GM10248 (cell line): ENCODE measurements at regions of chr4 and their contacts with region 1.

Region 1: GRCh38 chr4:165124463-165124862 is 11.8 kb upstream of the TMEM192 start:
- DNase-seq: no peak
- CTCF ChIP-seq: no peak

Region 2: DNA sequence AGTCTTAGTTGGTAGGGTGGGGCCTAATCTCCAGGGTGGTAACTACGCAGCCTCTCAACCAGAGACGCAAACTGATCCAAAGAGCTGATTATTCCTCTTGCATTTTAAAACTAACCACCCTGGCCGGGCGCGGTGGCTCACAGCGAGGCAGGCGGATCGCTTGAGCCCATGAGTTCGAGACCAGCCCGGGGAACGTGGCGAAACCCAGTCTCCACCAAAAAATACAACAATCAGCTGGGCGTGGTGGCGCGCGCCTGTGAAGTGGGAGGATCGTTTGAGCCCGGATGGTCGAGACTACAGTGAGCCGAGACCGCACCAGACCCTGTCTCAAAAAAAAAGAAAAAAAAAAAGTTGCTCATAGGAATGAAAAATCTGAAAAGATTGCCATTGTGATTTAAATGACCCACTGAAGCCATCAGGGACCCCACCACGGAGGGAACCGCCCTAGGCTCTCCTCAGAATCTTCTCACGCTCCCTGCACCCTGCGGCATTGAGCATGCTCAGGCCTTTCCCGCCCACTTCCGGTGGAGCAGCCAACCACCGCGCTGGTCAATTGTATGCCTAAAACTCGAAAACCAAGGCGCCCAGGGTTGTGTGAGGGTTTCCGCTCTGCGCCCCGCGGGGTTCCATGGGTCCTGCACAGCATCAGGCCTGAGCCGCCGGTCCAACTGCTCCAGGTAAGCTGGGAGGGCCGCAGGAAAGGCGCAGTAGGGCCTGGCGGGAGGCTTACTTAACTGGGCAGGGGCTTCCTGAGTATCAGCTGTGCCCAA is 92.8 kb before region 1 on chr4 and contains the start of gene TRIM60:
- CTCF ChIA-PET with region 1: no interaction called
- POLR2A ChIA-PET with region 1: no interaction called
- DNase-seq: no peak
- CTCF ChIP-seq: no peak

Region 3: GRCh38 chr4:165112368-165113139 is 11.9 kb before region 1 on chr4 and contains the start of gene TMEM192:
- CTCF ChIA-PET with region 1: interaction called, 31 read pairs
- POLR2A ChIA-PET with region 1: no interaction called
- DNase-seq: peak; percentile 97
- CTCF ChIP-seq: peak; percentile 33

Region 4: GRCh38 chr4:165319030-165319429 is 194.6 kb after region 1 on chr4:
- CTCF ChIA-PET with region 1: no interaction called
- POLR2A ChIA-PET with region 1: no interaction called
- DNase-seq: no peak
- CTCF ChIP-seq: no peak